ENCODE measurements at regions of chr15 and their contacts with region 1.

Region 1: DNA sequence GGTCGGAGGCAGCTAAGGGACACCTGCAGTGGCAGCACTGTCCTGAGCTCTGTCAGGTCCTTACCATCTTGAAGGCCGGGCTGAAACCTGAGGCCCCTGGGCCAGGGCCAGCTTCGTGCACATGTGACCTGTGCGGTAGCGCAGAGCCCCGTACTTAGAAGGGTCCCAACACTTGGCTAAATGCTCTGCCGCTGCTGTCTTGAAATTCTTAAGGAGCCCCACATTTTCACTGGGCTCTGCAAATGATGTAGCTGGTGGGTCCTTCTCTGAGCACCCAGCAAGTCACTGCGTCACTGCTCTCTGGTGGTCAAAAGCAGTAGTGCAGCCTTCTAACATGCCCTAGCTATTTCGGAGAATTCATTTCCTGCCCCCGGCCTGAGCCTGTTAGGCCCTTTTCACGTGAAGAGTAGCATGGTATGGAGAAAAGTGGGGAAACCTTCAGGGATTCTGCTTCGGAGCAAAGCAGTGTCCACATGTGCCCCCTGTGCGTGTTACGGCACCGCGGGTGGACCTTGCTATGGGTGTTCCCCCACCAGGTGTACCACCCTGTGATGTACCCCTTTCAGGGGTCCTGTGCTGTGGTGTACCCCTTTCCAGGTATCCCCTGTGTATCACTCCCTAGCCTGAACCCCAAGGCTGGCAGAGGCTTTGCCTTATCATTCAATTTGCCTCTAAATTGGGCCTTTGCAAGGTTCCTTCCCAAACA is 79.7 kb downstream of the TMEM266 start:
- DNase-seq: peak; percentile 80
- H3K4me3 Mint-ChIP-seq: no peak overlapping the region
- H3K27ac Mint-ChIP-seq: no peak overlapping the region
- H3K4me1 Mint-ChIP-seq: peaks cover 17% of the 10 kb centered on the region
- H3K27me3 Mint-ChIP-seq: peaks cover 35% of the 10 kb centered on the region

Region 2: GRCh38 chr15:75809986-75810750 is 329.4 kb before region 1 on chr15:
- CTCF ChIA-PET with region 1: interaction called, 40 read pairs
- POLR2A ChIA-PET with region 1: no interaction called
- DNase-seq: peak; percentile 32
- H3K4me3 Mint-ChIP-seq: no peak overlapping the region
- H3K27ac Mint-ChIP-seq: no peak overlapping the region
- H3K4me1 Mint-ChIP-seq: no peaks in the 10 kb centered on the region
- H3K27me3 Mint-ChIP-seq: peaks cover 11% of the 10 kb centered on the region

Region 3: GRCh38 chr15:76057332-76058000 is 82.1 kb before region 1 on chr15:
- CTCF ChIA-PET with region 1: interaction called, 186 read pairs
- POLR2A ChIA-PET with region 1: interaction called, 7 read pairs
- DNase-seq: peak; percentile 42
- H3K4me3 Mint-ChIP-seq: no peak overlapping the region
- H3K27ac Mint-ChIP-seq: no peak overlapping the region
- H3K4me1 Mint-ChIP-seq: peaks cover 32% of the 10 kb centered on the region
- H3K27me3 Mint-ChIP-seq: peaks cover 68% of the 10 kb centered on the region

Region 4: GRCh38 chr15:76065267-76065666 is 74.3 kb before region 1 on chr15:
- CTCF ChIA-PET with region 1: interaction called, 186 read pairs
- POLR2A ChIA-PET with region 1: interaction called, 7 read pairs
- DNase-seq: peak; percentile 42
- H3K4me3 Mint-ChIP-seq: no peak overlapping the region
- H3K27ac Mint-ChIP-seq: no peak overlapping the region
- H3K4me1 Mint-ChIP-seq: peaks cover 24% of the 10 kb centered on the region
- H3K27me3 Mint-ChIP-seq: peaks cover 52% of the 10 kb centered on the region

Region 5: GRCh38 chr15:76123031-76123430 is 16.5 kb before region 1 on chr15:
- CTCF ChIA-PET with region 1: interaction called, 11 read pairs
- POLR2A ChIA-PET with region 1: interaction called, 3 read pairs
- DNase-seq: no peak
- H3K4me3 Mint-ChIP-seq: no peak overlapping the region
- H3K27ac Mint-ChIP-seq: no peak overlapping the region
- H3K4me1 Mint-ChIP-seq: no peaks in the 10 kb centered on the region
- H3K27me3 Mint-ChIP-seq: peaks cover 26% of the 10 kb centered on the region

Region 6: GRCh38 chr15:76150971-76151598 is 11.6 kb after region 1 on chr15:
- CTCF ChIA-PET with region 1: interaction called, 66 read pairs
- POLR2A ChIA-PET with region 1: interaction called, 5 read pairs
- DNase-seq: peak; percentile 77
- H3K4me3 Mint-ChIP-seq: no peak overlapping the region
- H3K27ac Mint-ChIP-seq: no peak overlapping the region
- H3K4me1 Mint-ChIP-seq: peaks cover 15% of the 10 kb centered on the region
- H3K27me3 Mint-ChIP-seq: peaks cover 16% of the 10 kb centered on the region

Region 7: GRCh38 chr15:76252249-76252648 is 112.7 kb after region 1 on chr15:
- CTCF ChIA-PET with region 1: no interaction called
- POLR2A ChIA-PET with region 1: no interaction called
- DNase-seq: no peak
- H3K4me3 Mint-ChIP-seq: no peak overlapping the region
- H3K27ac Mint-ChIP-seq: no peak overlapping the region
- H3K4me1 Mint-ChIP-seq: peaks cover 5% of the 10 kb centered on the region
- H3K27me3 Mint-ChIP-seq: no peaks in the 10 kb centered on the region